Calu3 (cell line): ENCODE measurements at regions of chr11 and their contacts with region 1.

Region 1: DNA sequence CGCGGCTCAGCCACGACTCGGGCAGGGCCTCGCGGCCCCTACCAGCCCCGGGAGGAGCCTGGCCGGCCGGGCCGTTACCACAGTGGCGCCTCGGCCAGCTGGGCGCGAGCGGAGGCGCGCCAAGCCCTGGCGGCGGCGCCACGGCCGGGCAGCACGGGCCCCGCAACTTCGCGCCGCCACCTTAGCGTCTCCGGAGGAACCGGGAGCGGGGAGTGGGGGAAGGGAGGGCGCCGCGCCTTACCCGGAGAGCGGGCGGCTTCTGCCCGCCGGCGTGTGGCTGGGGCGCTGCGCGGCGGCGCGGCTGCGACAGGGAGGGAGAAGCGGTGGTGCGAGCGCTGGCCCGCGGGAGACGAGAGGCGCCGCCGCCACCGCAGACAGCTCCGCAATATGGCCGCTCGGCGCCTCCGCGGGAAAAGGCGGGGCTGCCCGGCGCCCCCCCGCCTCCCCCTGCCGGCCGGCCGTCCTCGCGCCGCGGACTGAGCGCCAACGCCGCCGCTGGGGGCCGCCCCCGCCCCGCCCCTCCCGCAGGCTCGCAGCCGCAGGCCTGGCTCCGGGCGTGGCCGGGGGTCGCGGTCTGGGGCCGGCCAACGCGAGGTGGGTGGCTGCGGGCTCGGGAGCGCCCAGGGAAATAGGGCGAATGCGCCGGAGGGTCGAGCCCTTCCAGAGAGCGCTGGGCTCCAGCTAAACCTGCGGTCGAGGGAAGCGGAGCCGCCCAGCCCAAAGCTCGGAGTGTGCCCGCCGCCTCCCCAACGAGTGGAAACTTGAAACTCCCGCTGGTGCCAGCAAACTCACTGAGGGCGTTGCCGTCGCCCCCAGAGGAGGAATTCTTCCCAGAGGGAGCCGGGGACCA is at the start of gene RDX:
- DNase-seq: peak; percentile 76
- H3K4me3 Mint-ChIP-seq: peak within 1 kb of the TSS; percentile 75
- H3K27ac Mint-ChIP-seq: peak within 1 kb of the TSS; percentile 75
- H3K4me1 Mint-ChIP-seq: no peaks in the 10 kb centered on the region
- H3K27me3 Mint-ChIP-seq: no peaks in the 10 kb centered on the region
- CTCF ChIP-seq: no peak
- total RNA-seq, gene RDX: 71.8 and 76.8 TPM in 2 replicates

Region 2: DNA sequence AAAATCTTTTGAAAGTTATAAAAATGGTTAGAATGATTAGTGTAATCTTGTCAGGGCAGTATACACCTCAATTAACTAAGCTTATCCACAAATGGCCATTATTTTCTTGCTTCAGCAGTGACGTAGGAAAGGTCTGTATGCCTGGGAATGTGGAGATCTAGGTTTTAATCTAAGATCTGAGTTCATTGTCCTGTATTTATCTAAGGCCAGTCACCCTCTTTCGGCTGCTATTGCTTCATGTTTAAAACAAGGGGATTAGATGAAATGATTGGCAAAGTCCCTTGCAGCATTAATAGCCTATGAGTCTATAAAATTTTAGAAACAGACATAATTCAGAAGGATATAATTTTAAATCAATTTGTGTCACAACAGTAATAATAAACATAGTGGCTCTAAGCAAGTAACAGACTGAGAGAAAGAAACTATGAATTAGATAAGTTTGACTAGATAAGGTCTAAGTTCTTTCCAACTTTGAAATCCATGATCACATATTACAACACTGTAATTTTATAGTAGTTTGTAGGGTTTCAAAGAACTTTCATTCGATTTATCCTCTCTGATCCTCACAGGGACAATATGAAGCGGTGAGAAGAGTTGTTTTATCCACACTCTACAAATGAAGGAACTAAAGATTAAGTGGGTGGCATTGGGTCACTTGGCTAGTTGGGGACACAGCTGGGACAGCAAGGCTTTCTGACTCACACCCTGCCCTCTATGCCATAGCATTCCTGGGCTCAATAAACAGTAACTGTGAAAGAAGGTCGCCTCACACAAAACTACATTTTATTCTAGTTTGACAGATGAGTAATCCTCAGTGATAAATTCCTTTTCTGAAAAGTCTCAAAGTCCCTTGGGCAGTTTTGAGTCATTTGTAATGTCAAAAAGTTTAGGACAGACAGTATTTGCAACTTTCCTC is 60.6 kb after region 1 on chr11:
- CTCF ChIA-PET with region 1: no interaction called
- intact Hi-C with region 1: loop called (anchors 5 kb)
- DNase-seq: peak; percentile 51
- H3K4me3 Mint-ChIP-seq: no peak overlapping the region
- H3K27ac Mint-ChIP-seq: peak overlapping the region; percentile 33
- H3K4me1 Mint-ChIP-seq: peaks cover 21% of the 10 kb centered on the region
- H3K27me3 Mint-ChIP-seq: no peaks in the 10 kb centered on the region
- CTCF ChIP-seq: no peak

Region 3: DNA sequence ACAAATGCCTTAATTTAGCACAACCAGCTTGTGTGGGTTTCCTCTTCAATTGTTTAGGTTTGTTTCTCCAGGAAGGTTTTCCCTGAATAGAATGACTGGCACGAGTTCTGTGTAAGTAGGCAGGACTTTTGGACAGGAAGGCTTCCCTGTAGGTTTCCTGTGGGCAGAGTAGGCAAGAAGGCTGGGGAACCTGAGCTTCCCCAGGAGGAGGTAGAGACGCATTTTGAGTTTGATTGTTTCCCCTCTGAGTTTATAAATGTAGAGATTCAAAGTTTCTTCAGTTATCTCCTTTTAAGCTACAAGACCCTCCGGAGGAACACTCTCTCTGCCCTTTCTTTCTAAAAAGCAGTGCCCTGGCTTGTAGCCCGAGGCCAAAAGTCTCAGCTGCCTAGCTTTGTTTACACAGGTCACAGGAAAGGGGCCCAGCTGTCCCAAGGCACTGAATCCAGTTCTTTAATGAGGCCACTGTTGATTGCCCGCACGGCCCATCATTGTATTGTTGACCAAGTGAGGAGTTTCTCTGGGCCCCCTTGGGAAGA is 66.6 kb after region 1 on chr11:
- CTCF ChIA-PET with region 1: interaction called, 5 read pairs
- intact Hi-C with region 1: loop called (anchors 2 kb)
- DNase-seq: peak; percentile 11
- H3K4me3 Mint-ChIP-seq: no peak overlapping the region
- H3K27ac Mint-ChIP-seq: peak overlapping the region; percentile 67
- H3K4me1 Mint-ChIP-seq: peaks cover 19% of the 10 kb centered on the region
- H3K27me3 Mint-ChIP-seq: no peaks in the 10 kb centered on the region
- CTCF ChIP-seq: no peak